Posterior vena cava (tissue), 2 donors: ENCODE measurements at regions of chr12 and their contacts with region 1.

Region 1: DNA sequence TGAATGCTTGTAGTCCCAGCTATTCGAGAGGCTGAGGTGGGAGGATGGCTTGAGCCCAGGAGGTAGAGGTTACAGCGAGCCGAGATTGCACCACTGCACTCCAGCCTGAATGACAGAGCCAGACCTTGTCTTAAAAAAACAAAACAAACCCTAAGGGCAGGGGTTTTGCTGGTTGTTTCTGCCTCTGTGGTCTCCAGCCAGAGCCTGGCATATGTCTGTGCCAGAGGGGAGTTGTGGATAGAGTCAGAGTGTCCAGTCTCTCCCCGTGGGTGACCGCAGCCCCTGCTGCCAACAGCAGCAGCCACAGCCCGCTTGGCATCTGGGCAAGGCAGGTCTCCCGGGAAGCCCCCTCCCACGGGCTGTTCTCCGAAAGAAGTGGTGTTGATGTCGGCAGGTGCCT is 37.6 kb downstream of the MVK start:
- DNase-seq: no peak

Region 2: DNA sequence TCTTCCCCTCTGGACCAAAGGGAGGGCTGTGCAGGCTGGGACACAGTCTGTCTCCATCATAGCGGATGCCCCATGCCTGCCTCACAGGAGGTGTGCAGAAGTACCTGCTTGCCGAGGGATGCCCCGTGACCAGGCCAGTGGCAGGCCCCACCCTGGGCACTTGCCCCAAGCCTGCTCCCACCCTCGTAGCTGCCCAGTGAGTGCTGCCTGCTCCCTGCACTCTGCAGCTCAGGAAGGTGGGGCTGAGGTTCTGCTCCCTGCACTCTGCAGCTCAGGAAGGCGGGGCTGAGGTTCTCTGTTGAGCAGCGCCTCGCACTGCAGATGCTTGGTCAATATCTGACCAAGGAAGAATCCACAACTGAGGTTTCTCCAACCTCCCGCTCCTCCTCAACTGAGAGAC is 44.8 kb before region 1 on chr12:
- intact Hi-C with region 1: loop called in 1 of 2 experiments (anchors 1 kb)
- DNase-seq: no peak

Region 3: DNA sequence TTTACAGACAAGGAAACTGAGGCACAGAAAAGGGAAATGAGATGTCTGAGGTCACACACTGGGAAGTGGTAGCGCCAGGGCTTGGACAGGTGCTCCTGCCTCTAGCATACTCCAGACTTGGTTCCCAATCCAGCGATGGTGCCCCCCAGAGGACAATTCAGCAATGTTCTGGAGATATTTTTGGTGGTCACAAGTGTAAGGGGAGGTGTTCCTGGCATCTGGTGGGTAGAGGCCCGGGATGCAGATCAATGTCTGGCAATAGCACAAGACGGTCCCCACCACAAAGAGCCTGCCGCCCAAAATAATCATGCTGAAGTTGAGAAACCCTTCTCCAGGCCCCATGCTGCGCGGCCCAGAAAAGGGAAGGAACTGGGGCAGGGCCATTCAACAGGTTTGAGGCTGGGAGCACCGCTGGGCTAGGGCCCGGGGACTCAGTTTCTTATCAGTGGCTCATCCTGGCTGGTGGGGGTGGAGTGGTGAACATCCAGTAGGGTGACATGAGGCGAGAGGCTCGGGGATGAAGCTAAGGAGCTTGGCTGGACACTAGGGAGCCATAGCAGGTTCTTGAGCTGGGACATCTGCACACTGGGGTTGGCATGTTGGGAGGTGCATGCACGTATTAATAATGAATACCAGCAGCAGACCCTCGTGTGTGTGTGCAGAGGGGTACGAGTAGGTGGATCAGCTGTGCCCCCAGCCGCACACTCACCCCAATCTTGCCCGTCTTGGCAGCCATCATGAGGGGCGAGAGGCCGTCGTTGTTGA is 186.9 kb after region 1 on chr12:
- intact Hi-C with region 1: no loop called
- DNase-seq: no peak